CD8-positive, alpha-beta T cell (primary cell): ENCODE measurements at regions of chr11 and their contacts with region 1.

Region 1: DNA sequence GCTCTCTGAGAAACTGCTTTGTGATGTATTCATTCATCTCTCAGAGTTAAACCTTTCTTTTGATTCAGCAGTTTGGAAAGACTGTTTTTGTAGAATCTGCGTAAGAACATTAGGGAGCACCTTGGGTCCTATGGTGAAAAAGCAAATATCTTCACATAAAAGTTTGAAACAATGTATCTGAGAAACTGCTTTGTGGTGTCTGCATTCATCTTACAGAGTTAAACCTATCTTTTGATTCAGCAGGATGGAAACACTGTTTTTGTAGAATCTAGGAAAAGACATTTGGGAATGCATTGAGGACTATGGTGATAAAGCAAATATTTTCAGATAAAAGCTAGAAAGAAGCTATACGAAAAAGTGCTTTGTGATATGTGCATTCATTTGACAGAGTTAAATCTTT is 361.3 kb downstream of the OR4C45 start:
- DNase-seq: no peak
- ATAC-seq: no peak
- H3K4me3 ChIP-seq: no peak overlapping the region
- H3K4me3 Mint-ChIP-seq: no peak overlapping the region
- H3K27ac ChIP-seq: no peak overlapping the region
- H3K27ac Mint-ChIP-seq: no peak overlapping the region
- H3K4me1 ChIP-seq: no peaks in the 10 kb centered on the region
- H3K4me1 Mint-ChIP-seq: no peaks in the 10 kb centered on the region
- H3K27me3 ChIP-seq: no peaks in the 10 kb centered on the region
- H3K27me3 Mint-ChIP-seq: no peaks in the 10 kb centered on the region
- CTCF ChIP-seq: no peak

Region 2: GRCh38 chr11:50275179-50275578 is 118.8 kb before region 1 on chr11:
- CTCF ChIA-PET with region 1: no interaction called
- POLR2A ChIA-PET with region 1: no interaction called
- intact Hi-C with region 1: loop called in 1 of 2 experiments (anchors 10 kb)
- DNase-seq: no peak
- ATAC-seq: no peak
- H3K4me3 ChIP-seq: no peak overlapping the region
- H3K4me3 Mint-ChIP-seq: no peak overlapping the region
- H3K27ac ChIP-seq: no peak overlapping the region
- H3K27ac Mint-ChIP-seq: no peak overlapping the region
- H3K4me1 ChIP-seq: no peaks in the 10 kb centered on the region
- H3K4me1 Mint-ChIP-seq: no peaks in the 10 kb centered on the region
- H3K27me3 ChIP-seq: no peaks in the 10 kb centered on the region
- H3K27me3 Mint-ChIP-seq: no peaks in the 10 kb centered on the region
- CTCF ChIP-seq: no peak